Left colon (tissue), 2 donors: ENCODE measurements at regions of chr1 and their contacts with region 1.

Region 1: DNA sequence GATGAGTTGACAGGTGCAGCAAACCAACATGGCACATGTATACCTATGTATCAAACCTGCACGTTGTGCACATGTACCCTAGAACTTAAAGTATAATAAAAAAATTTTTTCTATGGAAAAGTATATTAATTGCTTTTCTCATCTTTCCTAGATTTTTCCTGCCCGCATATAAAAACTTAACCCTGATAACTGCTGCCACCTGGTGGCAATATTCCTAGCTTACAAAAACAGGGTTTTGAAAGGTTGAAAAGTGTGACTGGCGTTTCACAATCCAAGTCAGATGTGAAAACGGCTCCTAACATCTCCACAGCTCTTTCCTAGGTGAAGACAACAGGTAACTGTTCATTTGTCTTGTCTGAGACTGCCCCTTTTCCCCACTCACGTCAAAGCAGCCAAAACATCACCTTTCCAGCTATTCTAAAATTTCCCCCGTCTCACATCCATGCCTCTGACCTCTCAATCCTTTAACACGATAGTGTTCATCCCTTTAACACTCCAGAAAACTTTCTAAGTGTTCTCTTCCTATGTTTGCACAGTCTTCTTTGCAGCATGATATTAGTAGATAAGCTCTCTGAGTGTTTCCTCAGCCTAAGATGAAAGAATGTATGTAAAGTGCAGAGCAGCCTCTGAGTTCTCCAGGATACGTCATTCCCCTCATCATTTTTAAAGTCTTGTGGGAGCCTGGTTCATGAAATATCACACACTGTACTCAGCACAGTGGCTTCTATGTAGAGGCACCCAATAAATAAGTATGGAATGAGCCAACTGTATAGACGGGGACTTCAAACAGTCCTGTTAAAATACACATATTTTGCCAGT is 27.5 kb downstream of the OVGP1 start:
- DNase-seq: peak in 1 of 2 donors; percentile 66
- ATAC-seq: no peak

Region 2: GRCh38 chr1:111099289-111099688 is 300.7 kb before region 1 on chr1:
- intact Hi-C with region 1: no loop called
- DNase-seq: peak in 1 of 2 donors; percentile 41
- ATAC-seq: peak; percentile 79

Region 3: GRCh38 chr1:111222308-111223125 is 177.5 kb before region 1 on chr1:
- intact Hi-C with region 1: loop called in 1 of 2 experiments (anchors 5 kb)
- DNase-seq: peak; percentile 65 to 83
- ATAC-seq: peak; percentile 92